Caco-2 (cell line): ENCODE measurements at regions of chr2 and their contacts with region 1.

Region 1: GRCh38 chr2:46062637-46063412 is 234.4 kb upstream of the EPAS1 start:
- DNase-seq: peak; percentile 75 to 86
- H3K4me3 ChIP-seq: no peak overlapping the region
- H3K4me3 Mint-ChIP-seq: no peak overlapping the region
- H3K27ac Mint-ChIP-seq: no peak overlapping the region
- H3K4me1 ChIP-seq: peaks cover 21% of the 10 kb centered on the region
- H3K4me1 Mint-ChIP-seq: peaks cover 37% of the 10 kb centered on the region
- H3K27me3 ChIP-seq: no peaks in the 10 kb centered on the region
- H3K27me3 Mint-ChIP-seq: no peaks in the 10 kb centered on the region
- CTCF ChIP-seq: peak; percentile 84 to 91

Region 2: DNA sequence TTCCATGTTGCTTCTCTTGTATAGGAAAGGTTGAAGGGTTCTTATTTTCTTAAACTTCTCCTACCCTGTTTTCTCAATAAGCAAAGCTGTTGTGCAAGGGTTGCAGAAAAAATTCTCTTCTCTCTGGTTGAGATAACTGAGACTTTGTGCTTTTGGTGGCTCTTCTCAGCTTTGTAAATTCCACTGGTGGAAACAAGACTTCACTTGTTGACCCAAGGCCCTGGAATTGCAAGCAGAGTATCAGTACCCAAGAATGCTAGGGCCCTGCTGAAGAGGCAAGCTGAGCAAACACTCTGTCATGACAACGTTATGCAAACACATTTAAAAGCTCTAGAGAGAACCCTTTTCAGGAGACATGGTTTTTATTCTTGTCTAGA is 60.3 kb before region 1 on chr2:
- CTCF ChIA-PET with region 1: interaction called, 11 read pairs
- POLR2A ChIA-PET with region 1: no interaction called
- intact Hi-C with region 1: no loop called
- DNase-seq: peak; percentile 71 to 72
- H3K4me3 ChIP-seq: no peak overlapping the region
- H3K4me3 Mint-ChIP-seq: no peak overlapping the region
- H3K27ac Mint-ChIP-seq: peak overlapping the region; percentile 67
- H3K4me1 ChIP-seq: peaks cover 41% of the 10 kb centered on the region
- H3K4me1 Mint-ChIP-seq: peaks cover 53% of the 10 kb centered on the region
- H3K27me3 ChIP-seq: no peaks in the 10 kb centered on the region
- H3K27me3 Mint-ChIP-seq: no peaks in the 10 kb centered on the region
- CTCF ChIP-seq: no peak

Region 3: GRCh38 chr2:46164581-46165301 is 101.9 kb after region 1 on chr2:
- CTCF ChIA-PET with region 1: interaction called, 8 read pairs
- POLR2A ChIA-PET with region 1: no interaction called
- intact Hi-C with region 1: loop called (anchors 1 kb)
- DNase-seq: peak; percentile 74 to 89
- H3K4me3 ChIP-seq: no peak overlapping the region
- H3K4me3 Mint-ChIP-seq: peak overlapping the region; percentile 37
- H3K27ac Mint-ChIP-seq: peak overlapping the region; percentile 92
- H3K4me1 ChIP-seq: peaks cover 56% of the 10 kb centered on the region
- H3K4me1 Mint-ChIP-seq: peaks cover 56% of the 10 kb centered on the region
- H3K27me3 ChIP-seq: no peaks in the 10 kb centered on the region
- H3K27me3 Mint-ChIP-seq: no peaks in the 10 kb centered on the region
- CTCF ChIP-seq: no peak

Region 4: GRCh38 chr2:46230115-46230571 is 167.3 kb after region 1 on chr2:
- CTCF ChIA-PET with region 1: interaction called, 6 read pairs
- POLR2A ChIA-PET with region 1: no interaction called
- intact Hi-C with region 1: loop called (anchors 5 kb)
- DNase-seq: no peak
- H3K4me3 ChIP-seq: no peak overlapping the region
- H3K4me3 Mint-ChIP-seq: no peak overlapping the region
- H3K27ac Mint-ChIP-seq: peak overlapping the region; percentile 32
- H3K4me1 ChIP-seq: peaks cover 3% of the 10 kb centered on the region
- H3K4me1 Mint-ChIP-seq: peaks cover 16% of the 10 kb centered on the region
- H3K27me3 ChIP-seq: no peaks in the 10 kb centered on the region
- H3K27me3 Mint-ChIP-seq: peaks cover 3% of the 10 kb centered on the region
- CTCF ChIP-seq: no peak

Region 5: GRCh38 chr2:46364797-46365457 is 302.1 kb after region 1 on chr2:
- CTCF ChIA-PET with region 1: interaction called, 8 read pairs
- POLR2A ChIA-PET with region 1: no interaction called
- intact Hi-C with region 1: loop called (anchors 1 kb)
- DNase-seq: peak in 1 of 2 experiments; percentile 68
- H3K4me3 ChIP-seq: no peak overlapping the region
- H3K4me3 Mint-ChIP-seq: no peak overlapping the region
- H3K27ac Mint-ChIP-seq: no peak overlapping the region
- H3K4me1 ChIP-seq: no peaks in the 10 kb centered on the region
- H3K4me1 Mint-ChIP-seq: no peaks in the 10 kb centered on the region
- H3K27me3 ChIP-seq: no peaks in the 10 kb centered on the region
- H3K27me3 Mint-ChIP-seq: no peaks in the 10 kb centered on the region
- CTCF ChIP-seq: peak; percentile 67 to 75

Region 6: DNA sequence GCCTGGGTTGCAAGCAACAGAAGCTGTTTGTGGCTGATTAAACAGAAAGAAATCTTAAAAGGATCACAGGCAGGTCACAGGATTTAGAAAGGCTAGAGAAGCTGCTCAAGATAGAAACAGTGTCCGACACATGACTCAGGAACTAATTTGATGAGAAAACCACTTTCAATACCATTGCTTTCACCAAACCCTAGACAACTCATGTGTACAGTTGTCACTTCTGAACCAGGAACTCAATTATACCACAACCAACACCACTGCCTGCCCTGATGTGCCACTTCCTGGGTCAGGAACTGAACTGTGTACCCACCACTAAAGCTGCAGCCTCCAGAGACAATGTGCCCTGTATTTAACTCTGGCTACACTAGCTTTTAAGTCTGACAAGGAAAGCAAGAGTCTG is 472.5 kb after region 1 on chr2:
- CTCF ChIA-PET with region 1: no interaction called
- POLR2A ChIA-PET with region 1: no interaction called
- intact Hi-C with region 1: no loop called
- DNase-seq: no peak
- H3K4me3 ChIP-seq: no peak overlapping the region
- H3K4me3 Mint-ChIP-seq: no peak overlapping the region
- H3K27ac Mint-ChIP-seq: no peak overlapping the region
- H3K4me1 ChIP-seq: no peaks in the 10 kb centered on the region
- H3K4me1 Mint-ChIP-seq: peaks cover 4% of the 10 kb centered on the region
- H3K27me3 ChIP-seq: no peaks in the 10 kb centered on the region
- H3K27me3 Mint-ChIP-seq: no peaks in the 10 kb centered on the region
- CTCF ChIP-seq: no peak